Heart left ventricle (tissue), 16 donors: ENCODE measurements at regions of chr1 and their contacts with region 1.

Region 1: GRCh38 chr1:174337000-174337681 is 110.6 kb upstream of the GPR52 start:
- DNase-seq: no peak
- ATAC-seq: no peak
- H3K4me3 ChIP-seq: no peak overlapping the region
- H3K27ac ChIP-seq: peak overlapping the region in 1 of 12 donors; percentile 5
- H3K4me1 ChIP-seq: peaks cover 0 to 10% (median 0%) of the 10 kb centered on the region in 12 donors
- H3K27me3 ChIP-seq: no peaks in the 10 kb centered on the region
- CTCF ChIP-seq: no peak
- POLR2A ChIP-seq: no peak

Region 2: GRCh38 chr1:174315239-174315638 is 21.9 kb before region 1 on chr1:
- intact Hi-C with region 1: loop called in 1 of 10 experiments (anchors 1 kb)
- DNase-seq: no peak
- ATAC-seq: no peak
- H3K4me3 ChIP-seq: no peak overlapping the region
- H3K27ac ChIP-seq: no peak overlapping the region
- H3K4me1 ChIP-seq: no peaks in the 10 kb centered on the region
- H3K27me3 ChIP-seq: no peaks in the 10 kb centered on the region
- CTCF ChIP-seq: no peak
- POLR2A ChIP-seq: no peak